ENCODE measurements at regions of chr12 and their contacts with region 1.

Region 1: GRCh38 chr12:7933255-7933729 is 2.7 kb downstream of the SLC2A3 start:
- DNase-seq: peak; percentile 68 to 86 (median 83)
- ATAC-seq: peak; percentile 87 to 95 (median 91)
- H3K4me3 ChIP-seq: peak overlapping the region; percentile 6 to 74 (median 64)
- H3K27ac ChIP-seq: peak overlapping the region; percentile 64 to 96 (median 88)
- H3K4me1 ChIP-seq: peaks cover 0 to 38% (median 7%) of the 10 kb centered on the region in 12 donors
- H3K27me3 ChIP-seq: peaks cover 0 to 4% (median 0%) of the 10 kb centered on the region in 9 donors
- CTCF ChIP-seq: peak; percentile 47 to 87 (median 72)
- POLR2A ChIP-seq: peak in 1 of 2 donors; percentile 49

Region 2: GRCh38 chr12:7638760-7639555 is 294.3 kb before region 1 on chr12:
- intact Hi-C with region 1: no loop called
- DNase-seq: peak; percentile 70 to 74 (median 72)
- ATAC-seq: peak; percentile 93 to 97 (median 96)
- H3K4me3 ChIP-seq: peak overlapping the region in 6 of 12 donors; percentile 20 to 55 (median 50)
- H3K27ac ChIP-seq: peak overlapping the region in 1 of 12 donors; percentile 69
- H3K4me1 ChIP-seq: peaks cover 0 to 14% (median 0%) of the 10 kb centered on the region in 12 donors
- H3K27me3 ChIP-seq: peaks cover 0 to 33% (median 4%) of the 10 kb centered on the region in 9 donors
- CTCF ChIP-seq: peak; percentile 80 to 96 (median 86)
- POLR2A ChIP-seq: no peak

Region 3: DNA sequence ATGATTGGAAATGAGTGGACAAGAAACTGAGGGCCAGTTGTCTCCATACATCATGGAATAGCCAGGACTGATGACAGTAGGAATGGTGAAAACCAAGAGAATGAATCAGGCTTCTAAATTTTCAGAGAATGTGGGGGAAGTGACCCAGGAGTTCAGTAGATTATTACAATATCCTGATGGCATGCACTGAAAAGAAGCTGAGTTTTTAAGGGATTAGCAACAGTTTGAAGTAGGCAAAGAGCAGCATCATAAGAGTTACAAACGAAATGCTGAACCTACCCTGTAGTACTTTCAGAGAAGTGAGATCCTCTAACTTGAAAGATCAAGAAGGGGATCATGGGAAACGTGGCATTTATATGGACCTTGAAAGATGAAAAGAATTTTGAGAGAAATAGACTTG is 73.7 kb before region 1 on chr12:
- intact Hi-C with region 1: loop called in 2 of 10 experiments (anchors 5 kb)
- DNase-seq: no peak
- ATAC-seq: no peak
- H3K4me3 ChIP-seq: no peak overlapping the region
- H3K27ac ChIP-seq: no peak overlapping the region
- H3K4me1 ChIP-seq: peaks cover 0 to 4% (median 0%) of the 10 kb centered on the region in 12 donors
- H3K27me3 ChIP-seq: peaks cover 0 to 11% (median 0%) of the 10 kb centered on the region in 9 donors
- CTCF ChIP-seq: no peak
- POLR2A ChIP-seq: no peak

Region 4: GRCh38 chr12:7959701-7960121 is 26.4 kb after region 1 on chr12:
- intact Hi-C with region 1: loop called in 3 of 10 experiments (anchors 1 to 2 kb)
- DNase-seq: no peak
- ATAC-seq: peak in 2 of 4 donors; percentile 36 to 55
- H3K4me3 ChIP-seq: peak overlapping the region in 2 of 12 donors; percentile 64 to 65
- H3K27ac ChIP-seq: peak overlapping the region in 3 of 12 donors; percentile 85 to 94 (median 89)
- H3K4me1 ChIP-seq: peaks cover 0 to 36% (median 5%) of the 10 kb centered on the region in 12 donors
- H3K27me3 ChIP-seq: no peaks in the 10 kb centered on the region
- CTCF ChIP-seq: no peak
- POLR2A ChIP-seq: no peak

Region 5: DNA sequence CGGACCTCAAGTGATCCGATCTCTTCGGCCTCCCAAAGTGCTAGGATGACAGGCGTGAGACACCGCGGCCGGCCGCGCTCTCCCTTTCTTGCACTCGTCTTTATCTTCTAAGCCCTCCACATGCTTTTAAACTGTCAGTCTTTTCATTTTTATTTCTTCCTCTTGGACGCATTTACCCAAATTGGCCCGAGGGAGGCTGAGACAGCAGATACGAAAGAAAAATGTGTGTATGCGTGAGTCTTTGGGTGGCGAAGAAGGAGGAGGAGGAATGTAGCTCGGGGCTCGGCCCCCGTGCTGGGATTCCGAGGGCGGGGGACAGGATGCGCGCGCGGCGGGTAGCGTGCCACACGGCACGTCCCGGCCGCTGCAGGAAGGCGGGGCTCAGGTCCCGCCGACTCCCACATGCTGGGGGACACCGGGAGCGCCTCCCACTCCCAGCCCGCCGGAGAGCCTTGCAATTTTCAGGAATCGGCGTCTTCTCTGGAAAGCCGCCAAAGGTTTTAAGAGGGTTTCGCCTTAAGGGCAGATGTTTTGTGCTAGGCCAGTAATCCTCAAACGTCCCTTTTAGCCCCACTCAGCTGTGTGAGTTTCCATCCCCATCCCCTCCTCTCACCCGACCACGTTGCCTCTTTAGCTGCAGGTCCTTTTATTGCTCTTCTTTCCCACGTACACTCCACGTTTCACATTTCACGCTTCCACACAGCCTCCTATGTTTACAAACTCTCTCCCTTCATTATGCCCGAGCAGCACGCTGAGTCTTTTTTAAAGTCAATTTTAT is 37.4 kb after region 1 on chr12:
- intact Hi-C with region 1: loop called in 7 of 10 experiments (anchors 2 to 5 kb)
- DNase-seq: peak; percentile 88 to 95 (median 93)
- ATAC-seq: peak; percentile 90 to 99 (median 98)
- H3K4me3 ChIP-seq: peak overlapping the region; percentile 25 to 61 (median 56)
- H3K27ac ChIP-seq: peak overlapping the region; percentile 74 to 91 (median 78)
- H3K4me1 ChIP-seq: peaks cover 0 to 34% (median 6%) of the 10 kb centered on the region in 12 donors
- H3K27me3 ChIP-seq: no peaks in the 10 kb centered on the region
- CTCF ChIP-seq: peak in 2 of 12 donors; percentile 4 to 8
- POLR2A ChIP-seq: peak in 1 of 2 donors; percentile 33

Region 6: DNA sequence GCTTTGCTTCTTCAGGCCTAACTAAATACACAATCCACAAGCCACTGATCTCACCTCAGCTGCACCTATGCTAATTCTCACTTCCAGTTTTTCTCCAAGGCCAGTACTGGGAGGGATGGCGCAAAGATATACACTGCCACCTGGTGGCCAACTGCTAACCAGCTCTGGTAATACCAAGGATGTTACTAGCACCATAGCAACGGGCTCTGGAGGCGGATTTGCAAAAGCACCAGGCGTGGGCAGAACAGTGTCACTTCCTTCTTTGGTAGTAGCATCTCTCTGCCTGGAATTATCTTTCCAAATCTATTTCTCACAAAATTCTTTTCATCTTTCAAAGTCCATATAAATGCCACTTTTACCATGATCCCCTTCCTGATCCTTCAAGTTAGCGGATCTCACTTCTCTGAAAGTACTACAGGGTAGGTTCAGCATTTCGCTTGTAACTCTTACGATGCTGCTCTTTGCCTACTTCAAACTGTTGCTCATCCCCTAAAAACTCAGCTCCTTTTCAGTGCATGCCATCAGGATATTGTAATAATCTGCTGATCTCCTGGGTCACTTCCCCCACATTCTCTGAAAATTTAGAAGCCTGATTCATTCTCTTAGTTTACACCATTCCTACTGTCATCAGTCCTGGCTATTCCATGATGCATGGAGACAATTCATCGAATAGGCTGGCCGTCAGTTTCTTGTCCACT is 62.1 kb after region 1 on chr12:
- intact Hi-C with region 1: loop called (anchors 1 to 5 kb)
- DNase-seq: peak; percentile 83 to 88 (median 85)
- ATAC-seq: peak; percentile 95 to 100 (median 100)
- H3K4me3 ChIP-seq: no peak overlapping the region
- H3K27ac ChIP-seq: peak overlapping the region in 4 of 12 donors; percentile 11 to 58 (median 29)
- H3K4me1 ChIP-seq: peaks cover 0 to 23% (median 0%) of the 10 kb centered on the region in 12 donors
- H3K27me3 ChIP-seq: no peaks in the 10 kb centered on the region
- CTCF ChIP-seq: peak; percentile 80 to 92 (median 86)
- POLR2A ChIP-seq: no peak

Region 7: DNA sequence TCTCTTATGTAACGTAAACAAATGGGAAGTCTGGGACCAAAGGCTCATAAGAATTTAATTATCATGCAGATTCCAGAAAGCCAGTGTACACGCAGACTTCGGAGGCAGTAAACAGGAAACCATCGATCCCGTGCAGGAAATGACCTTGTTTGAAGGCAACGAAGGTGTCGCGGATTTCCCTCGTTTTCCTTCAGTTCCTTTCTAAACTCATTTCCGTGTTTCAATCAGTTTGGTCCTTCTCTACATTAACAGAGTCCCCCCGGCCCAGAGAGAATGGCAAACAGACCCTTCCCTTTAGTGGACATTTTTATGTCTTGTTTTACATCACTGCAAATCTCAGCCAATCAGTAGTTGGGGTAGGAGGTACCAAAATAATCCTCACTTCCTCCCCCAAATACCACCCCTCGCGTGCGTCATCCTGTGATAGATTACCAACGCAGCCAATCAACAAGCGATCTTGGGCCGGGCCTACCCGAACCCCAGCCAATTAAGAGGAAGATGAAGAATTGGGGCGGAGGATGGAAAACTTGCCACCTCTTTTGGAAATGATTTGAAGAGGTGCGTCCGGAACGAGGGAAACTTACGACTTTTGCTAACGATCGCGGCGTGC is 93.1 kb after region 1 on chr12:
- intact Hi-C with region 1: loop called in 1 of 10 experiments (anchors 1 kb)
- DNase-seq: peak; percentile 94 to 98 (median 98)
- ATAC-seq: peak; percentile 98 to 100 (median 98)
- H3K4me3 ChIP-seq: peak overlapping the region; percentile 40 to 84 (median 78)
- H3K27ac ChIP-seq: peak overlapping the region; percentile 98 to 100 (median 100)
- H3K4me1 ChIP-seq: peaks cover 0 to 10% (median 4%) of the 10 kb centered on the region in 12 donors
- H3K27me3 ChIP-seq: no peaks in the 10 kb centered on the region
- CTCF ChIP-seq: no peak
- POLR2A ChIP-seq: peak in 1 of 2 donors; percentile 57

Region 8: DNA sequence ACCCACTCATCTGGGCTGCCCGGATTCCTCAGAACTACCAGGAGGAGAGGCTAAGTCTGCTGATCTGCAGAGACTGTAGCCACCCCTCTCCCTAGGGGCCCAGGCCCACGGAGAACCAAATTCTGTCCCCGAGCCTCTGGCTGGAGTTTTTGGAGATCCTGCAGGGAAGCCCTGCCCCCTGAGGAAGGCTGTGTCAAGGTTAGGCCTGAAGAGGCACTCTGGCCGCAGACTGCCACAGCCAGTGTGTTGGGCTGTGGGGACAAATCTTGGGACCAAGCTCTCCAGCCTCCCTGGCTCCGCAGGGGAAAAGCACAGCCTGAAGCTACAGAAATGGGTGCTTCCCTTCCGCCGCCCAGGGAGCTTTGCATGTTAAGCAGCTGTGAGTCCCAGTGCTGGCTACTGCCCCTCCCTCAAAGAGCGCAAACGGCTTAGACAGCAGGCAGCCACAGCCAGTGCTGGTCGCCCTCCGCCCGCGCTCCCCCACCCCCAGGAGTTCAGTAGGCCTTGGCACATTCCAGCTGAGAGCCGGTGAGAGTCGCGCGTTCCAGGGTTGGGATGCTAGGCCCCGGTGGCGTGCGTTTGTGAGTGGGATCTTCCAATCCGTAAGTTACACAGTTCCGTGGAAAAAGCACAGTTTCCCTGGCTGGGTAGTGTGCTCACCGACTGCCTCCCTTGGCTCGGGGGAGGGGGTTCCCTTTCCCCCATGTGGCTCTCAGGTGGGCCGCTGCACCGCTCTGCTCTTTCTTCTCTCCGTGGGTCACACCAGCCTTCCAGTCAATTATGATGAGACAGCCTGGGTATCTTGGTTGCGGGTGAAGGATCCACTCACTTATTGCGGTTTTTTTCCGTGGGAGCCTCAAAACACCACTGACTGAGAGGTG is 594.2 kb after region 1 on chr12:
- intact Hi-C with region 1: no loop called
- DNase-seq: no peak
- ATAC-seq: no peak
- H3K4me3 ChIP-seq: no peak overlapping the region
- H3K27ac ChIP-seq: no peak overlapping the region
- H3K4me1 ChIP-seq: no peaks in the 10 kb centered on the region
- H3K27me3 ChIP-seq: peaks cover 0 to 34% (median 0%) of the 10 kb centered on the region in 9 donors
- CTCF ChIP-seq: no peak
- POLR2A ChIP-seq: no peak

Measured in heart left ventricle (tissue), 16 donors.